Activated CD4-positive, alpha-beta memory T cell treated with anti-CD3 and anti-CD28 coated beads for 36 hours (primary cell): ENCODE measurements at regions of chr12 and their contacts with region 1.

Region 1: DNA sequence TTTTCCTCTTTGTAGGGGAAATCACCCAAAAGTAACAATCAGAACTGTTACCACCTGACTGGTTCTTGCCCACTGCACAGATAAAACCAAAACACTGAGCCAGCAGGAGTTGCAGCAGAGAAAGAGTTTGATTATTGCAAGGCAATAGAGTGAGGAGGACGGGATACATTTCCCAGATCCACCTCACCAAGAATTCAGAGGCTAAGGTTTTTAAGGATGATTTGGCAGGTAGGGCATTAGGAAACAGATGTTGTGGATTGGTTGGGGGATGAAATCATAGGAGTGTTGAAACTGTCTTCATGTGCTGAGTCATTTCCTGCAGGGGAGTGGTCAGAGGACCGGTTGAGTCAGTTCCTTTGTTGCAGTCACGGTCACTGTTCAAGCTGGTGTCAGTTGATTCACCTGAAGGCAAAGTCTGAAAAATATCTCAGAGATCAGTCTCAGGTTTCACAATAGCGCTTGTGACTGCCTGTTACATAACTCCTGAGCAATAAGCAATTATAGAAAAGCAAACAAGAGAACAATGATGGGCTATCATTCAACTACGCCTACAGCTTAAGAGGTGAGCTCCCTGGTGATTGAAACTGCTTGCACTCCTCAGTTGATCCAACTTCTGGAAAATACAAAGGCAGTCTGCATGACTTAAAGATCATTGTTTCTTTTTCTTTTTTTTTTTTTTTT is 20.3 kb upstream of the AMN1 start:
- DNase-seq: peak; percentile 87
- H3K4me3 Mint-ChIP-seq: no peak overlapping the region
- H3K27ac Mint-ChIP-seq: peak overlapping the region; percentile 63
- H3K4me1 Mint-ChIP-seq: peaks cover 57% of the 10 kb centered on the region
- H3K27me3 Mint-ChIP-seq: no peaks in the 10 kb centered on the region

Region 2: DNA sequence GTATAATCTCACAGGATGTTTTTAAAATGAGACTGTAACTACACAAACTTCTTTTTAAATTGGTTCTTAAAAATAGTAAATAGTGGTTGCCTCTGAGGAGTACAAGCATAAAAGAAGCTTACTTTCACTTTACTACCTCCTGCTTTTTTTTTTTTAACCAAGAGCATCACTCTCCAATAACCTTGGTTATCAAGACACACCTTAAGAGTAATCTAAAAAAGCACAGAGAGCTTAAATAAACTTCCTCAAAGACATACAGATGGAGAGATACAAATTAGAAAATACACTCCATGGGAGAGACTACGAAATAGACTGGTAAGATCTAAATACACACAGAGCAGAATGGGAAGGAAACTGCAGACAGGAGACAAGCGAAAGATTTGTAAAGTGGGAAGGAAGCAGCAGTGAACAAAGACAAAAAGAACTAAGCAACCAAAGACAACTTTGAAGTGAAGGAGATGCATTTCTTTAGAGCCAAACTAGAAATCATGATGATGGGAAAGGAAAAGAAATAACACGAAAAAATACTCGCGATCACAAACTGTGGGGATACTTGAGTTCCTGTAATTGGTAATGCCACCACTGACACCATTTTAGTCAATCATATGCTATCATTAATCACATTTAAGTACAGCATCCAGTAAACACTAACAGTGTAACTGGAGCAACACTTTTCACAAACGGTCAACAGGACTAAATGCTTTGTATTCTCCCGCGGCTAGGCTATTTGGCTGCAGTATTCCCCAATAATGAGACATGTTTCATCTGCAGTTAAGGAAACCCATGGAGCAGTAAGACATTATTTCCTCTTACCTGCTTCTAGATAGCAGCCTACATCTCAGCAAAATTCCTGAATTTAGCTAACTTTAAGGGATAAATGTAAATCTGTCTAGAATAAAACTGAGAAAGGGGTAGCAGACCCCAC is 431.4 kb before region 1 on chr12:
- CTCF ChIA-PET with region 1: no interaction called
- POLR2A ChIA-PET with region 1: no interaction called
- intact Hi-C with region 1: loop called (anchors 5 kb)
- DNase-seq: no peak
- H3K4me3 Mint-ChIP-seq: peak overlapping the region; percentile 79
- H3K27ac Mint-ChIP-seq: peak overlapping the region; percentile 99
- H3K4me1 Mint-ChIP-seq: peaks cover 75% of the 10 kb centered on the region
- H3K27me3 Mint-ChIP-seq: no peaks in the 10 kb centered on the region

Region 3: GRCh38 chr12:31728917-31729640 is 20.1 kb before region 1 on chr12 and contains the start of gene AMN1:
- CTCF ChIA-PET with region 1: no interaction called
- POLR2A ChIA-PET with region 1: interaction called, 5 read pairs
- intact Hi-C with region 1: loop called (anchors 1 kb)
- DNase-seq: peak; percentile 100
- H3K4me3 Mint-ChIP-seq: peak within 1 kb of the TSS; percentile 96
- H3K27ac Mint-ChIP-seq: peak within 1 kb of the TSS; percentile 97
- H3K4me1 Mint-ChIP-seq: peaks cover 41% of the 10 kb centered on the region
- H3K27me3 Mint-ChIP-seq: no peaks in the 10 kb centered on the region
- total RNA-seq, gene AMN1: 3.2 to 4.7 TPM

Region 4: DNA sequence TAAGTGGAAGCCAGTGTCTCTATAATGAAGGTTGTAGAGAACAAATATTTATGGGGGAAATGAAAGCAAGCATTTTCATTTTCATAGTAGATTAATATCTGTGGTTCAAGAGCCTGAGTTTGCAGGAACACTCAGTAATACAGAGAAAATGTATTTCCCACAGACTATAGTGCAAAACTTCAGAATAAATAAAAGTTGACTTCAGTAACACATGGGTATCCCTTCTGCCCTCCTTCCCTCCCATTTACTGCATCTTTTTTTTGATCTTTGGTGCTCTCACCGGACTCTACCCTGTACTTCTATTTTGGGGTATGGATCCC is 55.0 kb after region 1 on chr12:
- CTCF ChIA-PET with region 1: interaction called, 4 read pairs
- POLR2A ChIA-PET with region 1: no interaction called
- intact Hi-C with region 1: loop called (anchors 5 kb)
- DNase-seq: no peak
- H3K4me3 Mint-ChIP-seq: peak overlapping the region; percentile 66
- H3K27ac Mint-ChIP-seq: peak overlapping the region; percentile 79
- H3K4me1 Mint-ChIP-seq: peaks cover 47% of the 10 kb centered on the region
- H3K27me3 Mint-ChIP-seq: no peaks in the 10 kb centered on the region

Region 5: DNA sequence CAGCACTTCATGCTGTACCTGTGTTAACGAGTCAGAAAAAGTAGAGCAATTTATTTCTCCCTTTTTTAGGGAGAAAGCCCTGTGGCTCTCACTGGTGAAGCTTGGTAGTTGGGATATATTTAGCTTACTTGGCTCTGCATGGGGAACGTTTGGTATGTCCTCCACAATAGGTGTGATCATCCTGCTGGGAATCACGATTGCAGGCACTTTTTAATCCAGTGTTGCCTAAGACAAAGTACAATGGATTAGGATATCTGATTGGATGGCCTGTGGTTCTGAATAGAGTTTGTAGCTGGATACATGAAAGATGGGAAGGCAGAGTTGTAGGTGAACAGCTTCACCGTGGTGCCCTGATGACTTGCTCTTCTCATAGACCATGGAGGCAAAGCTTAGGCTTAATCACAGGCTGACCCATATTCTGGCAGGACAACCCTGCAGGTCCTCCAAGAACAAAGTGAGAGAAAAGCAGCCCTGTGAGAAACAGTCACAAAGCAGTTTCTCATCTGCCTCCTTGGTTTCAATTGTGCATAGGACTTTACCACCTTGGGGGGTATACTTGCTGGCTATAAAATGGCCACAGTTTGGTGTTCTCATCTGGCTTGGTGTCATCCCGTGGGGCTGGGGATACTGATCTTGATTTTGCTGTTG is 217.5 kb after region 1 on chr12:
- CTCF ChIA-PET with region 1: no interaction called
- POLR2A ChIA-PET with region 1: no interaction called
- intact Hi-C with region 1: loop called (anchors 1 kb)
- DNase-seq: peak; percentile 46
- H3K4me3 Mint-ChIP-seq: peak overlapping the region; percentile 59
- H3K27ac Mint-ChIP-seq: peak overlapping the region; percentile 97
- H3K4me1 Mint-ChIP-seq: peaks cover 82% of the 10 kb centered on the region
- H3K27me3 Mint-ChIP-seq: no peaks in the 10 kb centered on the region

Region 6: GRCh38 chr12:32334371-32334777 is 585.2 kb after region 1 on chr12:
- CTCF ChIA-PET with region 1: no interaction called
- POLR2A ChIA-PET with region 1: no interaction called
- intact Hi-C with region 1: loop called (anchors 1 kb)
- DNase-seq: peak; percentile 11
- H3K4me3 Mint-ChIP-seq: no peak overlapping the region
- H3K27ac Mint-ChIP-seq: peak overlapping the region; percentile 51
- H3K4me1 Mint-ChIP-seq: peaks cover 5% of the 10 kb centered on the region
- H3K27me3 Mint-ChIP-seq: no peaks in the 10 kb centered on the region